ENCODE measurements at regions of chr10 and their contacts with region 1.

Region 1: GRCh38 chr10:110304780-110305421 is at the start of gene SMNDC1:
- DNase-seq: peak; percentile 95
- H3K4me3 ChIP-seq: peak within 1 kb of the TSS; percentile 80
- H3K27ac ChIP-seq: peak within 1 kb of the TSS; percentile 92
- H3K27me3 ChIP-seq: no peaks in the 10 kb centered on the region
- CTCF ChIP-seq: no peak
- polyA plus RNA-seq, gene SMNDC1: 20.1 and 26.4 TPM in 2 replicates

Region 2: GRCh38 chr10:109934958-109935706 is 369.8 kb before region 1 on chr10:
- CTCF ChIA-PET with region 1: no interaction called
- POLR2A ChIA-PET with region 1: no interaction called
- DNase-seq: no peak
- H3K4me3 ChIP-seq: no peak overlapping the region
- H3K27ac ChIP-seq: peak overlapping the region; percentile 21
- H3K27me3 ChIP-seq: no peaks in the 10 kb centered on the region
- CTCF ChIP-seq: no peak

Region 3: GRCh38 chr10:110563132-110563531 is 258.2 kb after region 1 on chr10:
- CTCF ChIA-PET with region 1: interaction called, 13 read pairs
- POLR2A ChIA-PET with region 1: no interaction called
- DNase-seq: no peak
- H3K4me3 ChIP-seq: no peak overlapping the region
- H3K27ac ChIP-seq: no peak overlapping the region
- H3K27me3 ChIP-seq: no peaks in the 10 kb centered on the region
- CTCF ChIP-seq: no peak